Right ventricle myocardium inferior (tissue), 1 donor: ENCODE measurements at regions of chr9 and their contacts with region 1.

Region 1: DNA sequence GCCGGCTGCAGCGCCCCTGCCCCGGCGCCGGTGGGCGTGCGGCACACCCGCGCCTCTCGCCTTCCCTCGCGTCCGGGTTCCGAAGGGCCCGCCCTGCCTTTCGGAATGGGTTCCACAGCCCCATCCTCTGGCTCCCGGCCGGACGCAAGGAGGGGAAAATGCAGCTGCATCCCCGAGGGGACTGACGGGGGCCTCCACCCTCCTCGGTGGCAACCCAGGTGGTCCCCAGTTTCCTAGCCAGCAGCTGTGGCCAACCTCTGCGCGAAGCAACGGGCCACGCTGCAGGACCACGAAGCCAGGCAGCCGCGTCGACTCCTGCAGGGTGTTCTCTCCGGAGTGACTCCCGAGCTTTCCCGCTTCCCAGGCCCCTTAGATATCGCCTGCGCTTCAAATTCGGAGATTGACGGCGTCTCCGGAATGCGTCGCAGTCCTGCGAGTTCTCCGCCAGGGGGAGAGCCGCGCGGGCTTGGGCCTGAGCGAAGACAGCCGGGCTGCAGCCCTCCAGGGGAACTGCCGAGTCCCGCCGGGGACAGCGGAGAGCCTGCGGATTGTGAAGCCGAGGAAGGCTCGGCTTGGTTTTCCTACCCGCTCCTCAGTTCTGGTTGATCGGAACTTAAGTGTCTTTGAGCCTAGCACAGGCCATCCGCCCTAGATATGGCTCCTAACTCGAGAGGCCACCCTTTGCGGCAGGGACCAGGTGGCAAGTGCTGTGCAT is 582 bp upstream of the APBA1 start:
- DNase-seq: peak; percentile 91
- ATAC-seq: peak; percentile 91

Region 2: GRCh38 chr9:69421908-69422801 is 250.6 kb before region 1 on chr9:
- intact Hi-C with region 1: loop called (anchors 5 kb)
- DNase-seq: no peak
- ATAC-seq: peak; percentile 80

Region 3: DNA sequence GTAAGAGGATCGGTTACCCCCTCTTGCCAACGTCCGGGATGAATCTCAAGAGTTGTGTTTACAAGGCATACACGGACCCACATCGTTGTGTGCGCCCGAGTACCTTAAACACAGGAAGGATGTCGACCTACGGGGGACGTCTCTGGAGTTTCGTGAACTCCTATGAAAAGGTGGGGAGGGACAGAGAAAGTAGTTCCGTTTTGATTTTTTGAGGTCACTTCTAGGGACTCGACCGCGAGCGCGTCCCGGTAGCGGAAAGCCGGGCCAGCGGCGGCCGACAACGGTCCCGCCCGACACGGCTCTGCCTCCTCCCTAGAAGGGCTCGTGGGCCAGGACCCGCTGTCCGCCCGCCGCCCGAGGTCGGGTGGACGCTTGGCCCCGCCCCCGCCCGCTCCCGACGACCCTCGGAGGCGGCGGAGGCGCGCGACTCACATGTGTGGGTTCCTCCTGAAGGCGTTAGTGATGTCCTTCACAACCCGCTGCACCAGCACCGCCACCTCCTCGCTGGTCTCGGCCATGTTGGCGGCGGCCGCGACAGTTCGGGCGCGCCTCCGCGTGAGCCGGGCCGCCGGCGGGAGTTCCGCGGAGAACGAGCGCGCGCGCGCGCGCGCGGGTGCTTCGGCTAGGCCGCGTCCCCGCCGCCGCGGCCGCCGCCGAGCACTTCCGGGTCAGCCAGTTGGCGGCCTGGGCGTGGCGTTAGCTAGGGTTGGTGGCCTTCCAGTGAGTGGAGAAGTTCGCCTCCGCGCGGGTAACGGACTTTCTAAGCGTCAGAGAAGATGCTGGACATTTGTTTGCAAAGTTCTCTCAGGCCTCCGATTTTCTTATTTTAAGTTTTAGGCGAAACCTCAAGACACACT is 86.9 kb after region 1 on chr9 and contains the start of gene PTAR1:
- intact Hi-C with region 1: loop called (anchors 1 kb)
- DNase-seq: peak; percentile 97
- ATAC-seq: peak; percentile 98
- total RNA-seq, gene PTAR1: 24.2 TPM

Region 4: DNA sequence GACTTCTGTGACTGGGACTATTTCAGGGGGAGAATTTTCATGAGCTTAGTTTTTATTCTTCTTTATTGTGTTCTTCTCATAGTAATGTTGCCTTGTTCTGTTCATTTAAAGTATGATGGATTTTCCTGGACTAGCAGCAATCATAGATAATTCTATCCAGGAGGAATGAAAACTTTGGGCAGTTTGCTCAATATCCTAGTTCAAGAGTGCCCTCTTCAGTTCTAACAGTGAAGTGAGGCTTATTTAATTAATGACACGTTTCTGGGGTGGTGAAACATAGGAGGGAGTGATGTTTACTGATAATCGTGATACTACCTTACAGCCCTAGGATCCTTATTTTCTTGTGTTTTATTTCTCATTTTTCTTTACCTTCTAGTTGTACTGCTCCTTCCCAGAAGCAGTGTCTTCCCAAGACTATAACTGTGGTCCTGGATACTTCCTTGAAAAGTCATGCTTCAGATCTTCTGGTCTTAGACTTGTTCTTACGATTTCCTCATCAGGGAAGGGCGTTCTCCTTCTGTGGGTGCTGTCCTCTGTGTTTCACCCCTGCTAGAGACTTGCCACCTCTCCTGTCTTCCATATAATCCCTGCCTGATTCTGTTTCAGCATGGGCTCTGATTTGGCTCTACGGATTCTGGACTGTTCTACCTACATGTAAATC is 205.2 kb after region 1 on chr9:
- intact Hi-C with region 1: loop called (anchors 1 kb)
- DNase-seq: no peak
- ATAC-seq: peak; percentile 56

Region 5: DNA sequence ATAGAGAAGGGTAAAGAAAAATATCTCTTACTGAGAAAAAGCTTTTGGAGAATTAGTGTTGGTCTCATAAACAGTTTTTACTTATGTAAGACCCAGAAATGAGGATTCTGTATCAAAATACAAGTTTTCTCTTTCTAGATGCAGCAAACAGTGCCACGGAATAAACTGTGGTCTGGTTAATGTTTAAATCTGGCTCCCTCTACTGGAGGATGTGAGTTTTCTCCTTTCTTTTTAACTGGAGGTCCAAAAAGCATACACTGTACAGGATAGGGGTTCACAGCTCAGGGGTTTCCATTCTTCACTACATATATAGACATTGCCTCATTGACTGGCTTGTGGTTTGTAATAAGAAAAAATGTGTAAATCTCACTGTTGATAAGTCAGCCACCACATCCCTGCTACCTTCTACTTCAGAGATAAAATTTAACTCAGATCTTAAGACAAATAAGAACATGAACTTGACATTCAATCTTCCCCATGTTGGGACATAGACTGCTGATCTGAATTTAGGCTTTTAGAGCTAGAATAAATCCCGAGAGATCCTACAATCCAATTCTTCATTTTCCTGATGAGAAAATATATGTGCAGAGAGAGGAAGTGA is 246.8 kb after region 1 on chr9:
- intact Hi-C with region 1: loop called (anchors 2 kb)
- DNase-seq: no peak
- ATAC-seq: peak; percentile 77

Region 6: GRCh38 chr9:70229579-70229978 is 556.8 kb after region 1 on chr9:
- intact Hi-C with region 1: loop called (anchors 5 kb)
- DNase-seq: no peak
- ATAC-seq: peak; percentile 56